ENCODE measurements at regions of chr1 and their contacts with region 1.

Region 1: DNA sequence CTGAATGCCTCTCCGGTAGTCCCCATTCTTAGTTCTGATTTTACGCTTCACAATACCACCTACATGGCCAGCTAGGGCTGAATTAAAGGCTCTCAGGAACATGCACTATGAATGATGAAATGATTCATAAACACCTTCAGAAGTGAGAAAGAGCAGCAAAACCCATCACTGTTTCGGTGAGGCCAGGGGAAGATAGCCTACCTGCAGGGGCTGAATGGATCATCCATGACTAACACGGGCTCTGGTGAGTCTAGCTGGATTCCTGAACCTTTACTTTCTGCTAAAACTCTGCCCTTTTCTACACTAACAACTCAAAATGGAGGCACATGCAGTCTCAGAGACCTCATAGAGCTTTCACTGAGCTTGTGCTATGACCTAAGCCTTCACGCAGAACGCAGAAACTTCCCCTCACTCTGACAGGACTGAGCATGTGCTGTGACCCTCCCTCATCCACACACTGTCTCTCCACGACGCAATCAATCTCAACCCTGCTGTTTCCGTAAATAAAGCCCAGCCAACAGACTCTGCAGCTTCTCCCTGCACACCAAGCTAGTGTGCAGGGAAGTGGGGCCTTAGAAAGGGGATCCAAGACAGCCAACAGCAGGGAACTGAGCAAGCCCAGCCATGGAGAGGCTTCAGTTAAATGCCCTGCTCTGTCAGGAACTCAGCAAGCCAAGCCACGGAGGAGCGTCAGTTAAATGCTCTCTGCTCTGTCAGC is 207.8 kb downstream of the SLC45A1 start:
- DNase-seq: peak; percentile 61
- H3K4me3 Mint-ChIP-seq: no peak overlapping the region
- H3K27ac Mint-ChIP-seq: no peak overlapping the region
- H3K4me1 Mint-ChIP-seq: peaks cover 14% of the 10 kb centered on the region
- H3K27me3 Mint-ChIP-seq: no peaks in the 10 kb centered on the region

Region 2: GRCh38 chr1:8540261-8540941 is 14.7 kb after region 1 on chr1:
- CTCF ChIA-PET with region 1: interaction called, 5 read pairs
- POLR2A ChIA-PET with region 1: interaction called, 10 read pairs
- DNase-seq: no peak
- H3K4me3 Mint-ChIP-seq: no peak overlapping the region
- H3K27ac Mint-ChIP-seq: peak overlapping the region; percentile 66
- H3K4me1 Mint-ChIP-seq: peaks cover 53% of the 10 kb centered on the region
- H3K27me3 Mint-ChIP-seq: no peaks in the 10 kb centered on the region

Region 3: DNA sequence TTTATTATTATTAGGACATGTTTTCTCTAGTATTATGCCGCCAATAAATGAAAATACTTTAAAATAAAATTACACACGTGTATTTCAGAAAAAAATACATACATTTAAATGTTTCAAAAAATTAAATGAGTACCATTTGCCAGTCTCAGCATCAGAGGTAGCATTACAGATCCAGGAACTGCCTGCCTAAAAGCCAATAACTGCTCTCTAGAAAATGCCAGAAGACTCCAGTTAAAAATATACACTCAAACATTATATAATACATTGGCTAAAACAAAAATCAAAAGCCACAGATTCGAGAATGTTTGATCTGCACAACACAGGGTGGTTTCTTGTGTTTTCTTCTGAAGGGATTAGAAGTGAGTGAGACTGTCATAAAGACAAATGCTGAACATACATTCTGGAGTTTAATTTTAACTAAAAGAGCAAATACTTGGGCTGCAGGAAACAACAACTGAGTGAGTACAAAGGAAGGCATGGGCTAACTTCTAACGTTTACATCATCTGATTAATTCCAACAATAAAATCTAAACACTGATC is 186.2 kb after region 1 on chr1:
- CTCF ChIA-PET with region 1: no interaction called
- POLR2A ChIA-PET with region 1: no interaction called
- DNase-seq: no peak
- H3K4me3 Mint-ChIP-seq: peak overlapping the region; percentile 12
- H3K27ac Mint-ChIP-seq: peak overlapping the region; percentile 73
- H3K4me1 Mint-ChIP-seq: peaks cover 31% of the 10 kb centered on the region
- H3K27me3 Mint-ChIP-seq: peaks cover 1% of the 10 kb centered on the region

Measured in activated CD4-positive, alpha-beta memory T cell treated with anti-CD3 and anti-CD28 coated beads, Interleukin-2, amount 10 ng/mL, durations not matched to agents 7 days and 5 days (primary cell).